Prostate gland (tissue), 2 donors: ENCODE measurements at regions of chr9 and their contacts with region 1.

Region 1: DNA sequence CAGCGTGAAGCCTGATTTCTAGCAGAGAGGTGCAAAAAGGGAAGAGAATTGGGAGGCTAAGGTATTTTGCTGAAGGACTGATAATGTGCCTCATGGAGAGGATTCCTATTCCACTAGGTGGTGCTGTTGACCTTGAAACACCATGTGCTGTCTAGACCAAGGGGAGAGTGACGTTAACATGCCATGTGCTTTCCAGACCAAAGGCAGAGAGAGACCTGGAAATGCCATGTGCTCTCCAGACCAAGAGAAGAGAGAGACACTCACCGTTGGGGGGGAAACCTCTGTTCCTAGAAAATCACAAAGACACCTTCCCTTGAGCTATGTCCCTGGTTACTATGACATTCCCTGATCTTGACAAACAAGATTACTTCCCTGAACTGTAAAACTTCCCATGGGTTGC is 286.0 kb upstream of the TUSC1 start:
- DNase-seq: peak; percentile 40
- H3K4me3 ChIP-seq: no peak overlapping the region
- H3K27ac ChIP-seq: no peak overlapping the region
- H3K4me1 ChIP-seq: no peaks in the 10 kb centered on the region
- H3K27me3 ChIP-seq: no peaks in the 10 kb centered on the region
- CTCF ChIP-seq: peak in 3 of 4 experiments; percentile 40 to 49 (median 45)
- POLR2A ChIP-seq: no peak

Region 2: GRCh38 chr9:25733336-25733982 is 230.8 kb before region 1 on chr9:
- intact Hi-C with region 1: no loop called
- DNase-seq: no peak
- H3K4me3 ChIP-seq: no peak overlapping the region
- H3K27ac ChIP-seq: no peak overlapping the region
- H3K4me1 ChIP-seq: no peaks in the 10 kb centered on the region
- H3K27me3 ChIP-seq: no peaks in the 10 kb centered on the region
- CTCF ChIP-seq: no peak
- POLR2A ChIP-seq: no peak

Region 3: DNA sequence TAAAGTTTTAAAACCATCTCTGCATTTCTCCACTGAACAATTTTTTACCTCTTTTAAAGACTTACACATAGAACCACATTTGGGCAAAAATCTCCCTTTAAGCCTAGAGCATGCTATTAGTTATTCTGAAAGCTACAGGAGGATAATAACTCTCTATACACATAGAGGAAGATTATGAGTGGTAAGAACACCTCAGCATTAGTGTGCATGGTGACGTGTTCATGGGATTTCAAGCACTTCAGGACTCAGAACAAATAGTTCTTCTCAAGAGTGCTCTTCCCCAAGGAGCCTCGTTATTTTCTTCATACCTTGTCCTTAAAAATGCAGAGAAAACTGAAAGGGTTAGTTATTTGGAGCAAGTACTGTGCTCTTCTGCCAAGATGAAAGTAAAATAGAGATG is 29.1 kb before region 1 on chr9:
- intact Hi-C with region 1: no loop called
- DNase-seq: no peak
- H3K4me3 ChIP-seq: no peak overlapping the region
- H3K27ac ChIP-seq: no peak overlapping the region
- H3K4me1 ChIP-seq: no peaks in the 10 kb centered on the region
- H3K27me3 ChIP-seq: no peaks in the 10 kb centered on the region
- CTCF ChIP-seq: no peak
- POLR2A ChIP-seq: no peak

Region 4: DNA sequence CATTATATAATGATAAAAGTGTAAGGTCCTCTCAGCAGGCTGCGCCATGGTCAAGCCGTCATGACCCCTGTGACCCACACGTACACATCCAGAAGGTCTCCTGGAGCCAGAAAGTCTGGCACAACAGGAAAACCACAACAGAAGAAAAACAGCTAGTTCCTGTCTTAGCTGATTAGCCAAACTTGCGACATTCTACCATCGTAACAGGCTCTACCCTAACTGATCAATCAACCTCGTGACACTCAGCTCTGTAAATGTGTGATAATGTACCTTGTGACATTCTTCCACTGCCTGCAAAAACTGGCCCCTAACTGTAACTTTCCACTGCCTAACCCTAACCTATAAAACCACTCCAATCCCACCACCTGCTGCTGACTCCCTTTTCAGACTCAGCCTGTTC is 30.4 kb after region 1 on chr9:
- intact Hi-C with region 1: no loop called
- DNase-seq: no peak
- H3K4me3 ChIP-seq: no peak overlapping the region
- H3K27ac ChIP-seq: no peak overlapping the region
- H3K4me1 ChIP-seq: no peaks in the 10 kb centered on the region
- H3K27me3 ChIP-seq: no peaks in the 10 kb centered on the region
- CTCF ChIP-seq: no peak
- POLR2A ChIP-seq: no peak

Region 5: DNA sequence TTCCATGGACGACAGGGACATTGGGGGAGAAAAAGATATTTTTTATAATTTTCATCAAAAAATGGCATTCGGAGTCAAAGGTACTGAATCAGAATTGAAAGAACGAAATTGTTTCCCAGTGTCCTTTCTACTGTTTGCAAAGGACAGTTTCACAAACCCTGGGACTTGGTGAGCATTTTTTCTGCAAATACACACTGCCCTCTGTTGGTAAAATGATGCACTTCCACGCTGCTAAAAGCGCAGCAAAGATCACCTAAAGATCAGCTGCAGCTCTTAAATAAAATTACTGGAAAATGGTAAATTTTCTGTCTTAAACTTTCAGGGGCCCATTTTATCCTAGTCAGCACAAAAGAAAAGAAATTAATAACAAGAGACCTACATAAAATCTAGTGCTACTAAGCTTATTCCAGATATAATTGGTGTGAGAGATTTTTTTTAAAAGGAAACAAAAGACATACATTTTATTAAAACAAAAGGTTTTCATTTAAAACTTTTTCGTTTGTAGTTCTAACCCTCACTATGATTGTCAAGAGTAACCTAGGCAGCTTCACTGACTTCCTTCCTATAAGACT is 362.3 kb after region 1 on chr9:
- intact Hi-C with region 1: loop called (anchors 10 kb)
- DNase-seq: peak; percentile 21
- H3K4me3 ChIP-seq: no peak overlapping the region
- H3K27ac ChIP-seq: no peak overlapping the region
- H3K4me1 ChIP-seq: no peaks in the 10 kb centered on the region
- H3K27me3 ChIP-seq: no peaks in the 10 kb centered on the region
- CTCF ChIP-seq: peak; percentile 37 to 64 (median 60)
- POLR2A ChIP-seq: no peak